ENCODE measurements at regions of chr2 and their contacts with region 1.

Region 1: GRCh38 chr2:102235491-102235890 is 48.7 kb downstream of the IL1RL2 start:
- DNase-seq: no peak

Region 2: DNA sequence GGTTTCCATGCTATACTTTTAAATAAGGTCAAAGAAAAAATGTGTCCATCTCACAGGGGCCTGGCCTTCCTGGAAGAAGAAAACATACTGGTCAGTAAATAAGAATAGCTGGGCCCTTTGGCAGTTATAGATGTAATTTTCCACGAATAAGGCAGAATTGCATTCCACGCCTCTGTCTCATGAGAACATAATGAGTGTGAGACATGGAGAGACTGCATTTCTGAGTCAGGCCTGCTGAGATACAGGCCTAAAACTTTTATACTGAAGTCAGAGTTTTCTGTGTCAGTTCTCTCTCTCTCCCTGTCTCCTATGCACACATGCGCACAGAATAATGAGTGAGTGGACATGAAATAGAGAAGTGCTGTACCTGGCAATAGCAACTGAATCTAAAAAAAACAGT is 113.4 kb before region 1 on chr2:
- intact Hi-C with region 1: no loop called
- DNase-seq: no peak

Region 3: GRCh38 chr2:102147935-102148334 is 87.6 kb before region 1 on chr2:
- intact Hi-C with region 1: no loop called
- DNase-seq: no peak

Region 4: DNA sequence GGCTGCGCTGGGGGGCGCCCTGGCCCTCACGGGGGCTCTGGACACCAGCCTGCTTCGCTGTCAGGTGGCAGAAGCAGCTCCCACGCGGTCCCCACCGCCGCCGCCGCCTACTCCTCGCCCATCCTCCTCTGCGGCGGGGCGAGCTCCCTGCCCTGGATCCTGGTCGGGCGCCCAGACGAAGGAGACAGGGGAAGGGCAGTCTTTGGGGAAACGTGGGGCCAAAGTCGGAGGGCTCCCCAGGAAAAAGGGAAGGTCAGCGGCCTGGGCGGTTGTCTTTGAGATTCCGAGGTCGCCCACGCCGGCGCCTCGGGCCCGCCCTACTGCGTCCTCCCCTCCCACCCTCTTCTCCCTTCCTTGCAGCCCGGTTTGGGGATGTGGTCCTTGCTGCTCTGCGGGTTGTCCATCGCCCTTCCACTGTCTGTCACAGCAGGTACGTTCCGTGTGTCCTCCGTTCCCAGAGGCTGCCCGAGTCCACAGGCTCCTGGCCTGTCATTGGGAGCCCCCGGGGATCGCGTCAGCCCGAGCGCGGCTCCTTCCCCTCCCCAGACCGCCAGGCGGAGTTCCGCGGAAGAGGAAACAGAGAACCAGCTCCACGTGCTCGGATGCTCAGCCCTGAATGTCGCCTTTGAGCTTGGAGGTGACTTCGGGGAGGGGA is 47.9 kb before region 1 on chr2:
- intact Hi-C with region 1: loop called (anchors 10 kb)
- DNase-seq: peak in 40 of 42 donors; percentile 17 to 79 (median 54)